ENCODE measurements at regions of chrX and their contacts with region 1.

Region 1: DNA sequence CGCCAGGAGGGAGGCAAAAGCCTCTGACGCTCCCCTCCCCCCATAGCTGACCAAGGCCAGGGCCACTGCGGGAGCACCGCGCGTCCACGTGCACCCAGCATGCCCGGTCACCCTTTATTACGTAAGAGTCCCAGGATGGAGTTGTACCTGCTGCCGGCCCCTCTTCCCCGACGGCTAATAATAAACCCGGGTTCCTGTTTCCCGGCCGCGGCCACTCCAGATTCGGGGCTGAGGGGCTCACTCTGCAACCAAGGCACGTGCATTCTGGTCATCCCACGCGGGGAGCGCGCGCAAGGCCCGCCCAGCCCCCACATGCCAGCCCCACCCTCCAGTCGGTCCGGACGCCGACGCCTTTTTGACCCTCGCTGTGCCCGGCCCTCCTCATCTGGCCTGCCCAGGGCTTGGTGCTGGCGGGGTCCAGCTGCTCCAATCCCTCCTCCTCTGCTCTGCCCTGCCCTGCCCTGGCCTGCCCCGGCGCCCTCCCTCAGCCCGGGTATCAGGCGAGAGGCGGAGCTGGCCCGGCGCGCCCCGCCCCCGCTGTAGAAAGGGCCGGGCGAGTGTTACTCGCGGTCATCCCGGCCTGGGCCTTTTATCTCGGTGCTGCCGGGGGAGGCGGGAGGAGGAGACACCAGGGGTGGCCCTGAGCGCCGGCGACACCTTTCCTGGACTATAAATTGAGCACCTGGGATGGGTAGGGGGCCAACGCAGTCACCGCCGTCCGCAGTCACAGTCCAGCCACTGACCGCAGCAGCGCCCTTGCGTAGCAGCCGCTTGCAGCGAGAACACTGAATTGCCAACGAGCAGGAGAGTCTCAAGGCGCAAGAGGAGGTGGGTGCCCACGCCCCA is 2.5 kb downstream of the MID1IP1 start:
- DNase-seq: peak; percentile 74
- H3K4me3 Mint-ChIP-seq: peak overlapping the region; percentile 100
- H3K27ac Mint-ChIP-seq: peak overlapping the region; percentile 98
- H3K4me1 Mint-ChIP-seq: peaks cover 15% of the 10 kb centered on the region
- H3K27me3 Mint-ChIP-seq: no peaks in the 10 kb centered on the region

Region 2: GRCh38 chrX:38891641-38892413 is 88.0 kb after region 1 on chrX:
- intact Hi-C with region 1: loop called (anchors 5 kb)
- DNase-seq: peak; percentile 8
- H3K4me3 Mint-ChIP-seq: no peak overlapping the region
- H3K27ac Mint-ChIP-seq: peak overlapping the region; percentile 33
- H3K4me1 Mint-ChIP-seq: peaks cover 10% of the 10 kb centered on the region
- H3K27me3 Mint-ChIP-seq: no peaks in the 10 kb centered on the region

Region 3: DNA sequence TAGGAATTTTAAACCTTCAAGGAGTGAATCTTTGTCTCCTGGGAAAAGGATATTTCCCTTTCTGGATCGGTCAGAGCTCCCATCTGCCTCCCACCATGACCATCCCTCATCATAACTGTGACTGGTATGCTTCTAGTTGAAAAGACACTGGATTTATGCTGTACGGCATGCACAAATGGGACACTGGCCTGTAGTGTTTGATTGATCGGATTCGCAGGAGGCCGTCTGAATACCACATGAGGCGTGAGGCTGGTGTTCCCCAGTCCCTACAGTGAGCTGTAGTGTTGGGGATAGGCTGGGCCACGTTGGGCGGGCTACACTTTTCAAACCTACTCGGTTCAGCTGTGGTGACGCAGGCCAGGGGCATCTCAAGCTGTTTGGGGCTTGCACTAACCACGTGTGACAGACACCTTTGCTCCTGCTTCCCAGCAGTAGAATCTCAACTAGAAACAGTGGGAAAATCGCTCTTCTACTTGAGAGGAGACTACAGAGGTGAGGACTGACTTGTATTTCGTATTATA is 99.2 kb after region 1 on chrX:
- intact Hi-C with region 1: no loop called
- DNase-seq: no peak
- H3K4me3 Mint-ChIP-seq: no peak overlapping the region
- H3K27ac Mint-ChIP-seq: no peak overlapping the region
- H3K4me1 Mint-ChIP-seq: no peaks in the 10 kb centered on the region
- H3K27me3 Mint-ChIP-seq: no peaks in the 10 kb centered on the region

Region 4: GRCh38 chrX:39201305-39201990 is 397.6 kb after region 1 on chrX:
- intact Hi-C with region 1: loop called (anchors 10 kb)
- DNase-seq: peak; percentile 32
- H3K4me3 Mint-ChIP-seq: peak overlapping the region; percentile 69
- H3K27ac Mint-ChIP-seq: peak overlapping the region; percentile 97
- H3K4me1 Mint-ChIP-seq: peaks cover 89% of the 10 kb centered on the region
- H3K27me3 Mint-ChIP-seq: no peaks in the 10 kb centered on the region

Region 5: DNA sequence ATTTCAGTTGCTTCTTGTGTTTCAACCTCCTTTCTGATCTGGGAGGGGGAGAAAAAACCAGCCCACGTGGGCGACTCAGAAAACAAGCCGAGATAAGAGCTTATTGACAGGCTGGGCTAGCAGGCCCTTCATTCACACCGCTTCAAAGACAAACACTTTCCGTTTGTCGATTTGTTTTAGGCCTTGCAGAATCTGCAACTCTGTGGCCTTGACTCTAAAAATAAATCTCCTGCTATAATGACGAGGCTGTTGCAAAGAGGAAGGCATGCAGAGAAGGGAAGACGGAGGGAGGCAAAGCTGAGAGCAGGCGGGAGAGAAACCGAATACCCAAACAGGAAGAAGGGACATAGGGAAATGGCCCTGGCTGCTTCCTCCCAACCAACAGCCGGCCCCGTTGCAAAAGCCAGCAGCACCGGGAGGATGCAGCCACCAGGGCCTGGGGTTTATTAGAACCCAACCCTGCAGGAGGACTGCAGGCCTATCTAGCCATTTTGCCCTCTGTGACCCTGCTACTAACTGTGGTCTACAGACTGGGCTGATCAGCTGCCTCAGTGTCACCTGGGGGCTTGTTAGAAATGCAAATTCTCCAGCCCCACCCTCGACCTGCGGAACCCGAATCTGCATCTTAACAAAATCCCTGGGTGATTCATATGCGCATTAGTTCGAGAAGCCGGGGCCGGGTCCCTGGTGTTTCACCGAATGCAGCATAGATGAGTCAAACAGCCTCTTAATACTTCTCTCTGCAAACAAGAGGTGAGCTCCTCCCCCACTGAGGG is 968.4 kb after region 1 on chrX:
- intact Hi-C with region 1: loop called (anchors 10 kb)
- DNase-seq: peak; percentile 37
- H3K4me3 Mint-ChIP-seq: peak overlapping the region; percentile 69
- H3K27ac Mint-ChIP-seq: peak overlapping the region; percentile 99
- H3K4me1 Mint-ChIP-seq: peaks cover 45% of the 10 kb centered on the region
- H3K27me3 Mint-ChIP-seq: no peaks in the 10 kb centered on the region

Region 6: DNA sequence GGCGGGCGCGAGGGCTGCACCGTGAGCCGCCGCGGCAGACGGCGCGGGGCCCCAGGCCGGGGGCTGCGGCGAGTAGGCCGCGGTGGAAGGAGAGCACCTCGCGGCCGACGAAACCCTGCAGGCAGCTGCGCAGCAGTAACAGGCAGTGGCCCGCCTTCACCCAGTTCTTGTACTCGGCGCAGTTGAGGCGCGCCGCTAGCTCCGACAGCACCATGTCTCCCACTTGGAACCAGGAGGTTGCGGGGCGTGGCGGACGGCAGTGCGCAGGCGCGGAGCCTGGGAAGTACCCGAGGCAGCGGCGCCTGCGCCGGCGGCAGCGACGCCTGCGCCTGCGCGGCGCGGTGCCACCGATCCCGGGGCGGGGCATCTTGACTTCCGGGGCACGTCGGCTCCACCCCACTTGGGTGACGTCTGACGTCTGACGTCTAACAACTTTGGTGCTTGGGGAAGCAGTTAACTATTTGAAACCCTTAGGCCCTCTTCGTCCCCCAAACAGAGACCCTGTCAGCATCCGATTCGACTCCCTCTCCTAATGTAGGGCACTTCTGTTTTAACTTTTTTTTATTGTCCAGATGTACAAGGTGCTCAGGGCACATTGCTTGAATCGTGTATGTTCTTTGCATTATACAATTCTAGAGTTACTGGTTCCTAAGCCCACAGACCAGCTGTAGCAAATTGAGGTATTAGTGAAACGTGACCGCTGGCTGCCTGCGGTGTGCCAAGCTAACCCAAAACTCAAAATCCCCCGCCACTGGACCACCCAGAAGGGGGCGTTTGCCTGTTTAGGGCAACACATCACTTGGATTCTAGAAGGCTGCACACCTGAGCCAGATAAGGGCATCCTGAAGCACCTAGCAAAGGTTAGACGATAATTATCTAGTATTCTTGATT is 1843.7 kb after region 1 on chrX and contains the start of gene CXorf38:
- intact Hi-C with region 1: loop called (anchors 10 kb)
- DNase-seq: peak; percentile 85
- H3K4me3 Mint-ChIP-seq: peak within 1 kb of the TSS; percentile 87
- H3K27ac Mint-ChIP-seq: peak within 1 kb of the TSS; percentile 87
- H3K4me1 Mint-ChIP-seq: peaks cover 17% of the 10 kb centered on the region
- H3K27me3 Mint-ChIP-seq: no peaks in the 10 kb centered on the region
- total RNA-seq, gene CXorf38: 19.5 TPM in 2 replicates

Measured in activated T-helper 2 cell treated with anti-CD3 and anti-CD28 coated beads, Interferon-gamma antibody, Interleukin-2, Interleukin-4, amounts not matched to agents 10 μg/mL and 5 μg/mL and 100 μg/mL, durations not matched to agents 14 hours and 24 hours and 36 hours (primary cell).